ENCODE measurements at regions of chrX and their contacts with region 1.

Region 1: DNA sequence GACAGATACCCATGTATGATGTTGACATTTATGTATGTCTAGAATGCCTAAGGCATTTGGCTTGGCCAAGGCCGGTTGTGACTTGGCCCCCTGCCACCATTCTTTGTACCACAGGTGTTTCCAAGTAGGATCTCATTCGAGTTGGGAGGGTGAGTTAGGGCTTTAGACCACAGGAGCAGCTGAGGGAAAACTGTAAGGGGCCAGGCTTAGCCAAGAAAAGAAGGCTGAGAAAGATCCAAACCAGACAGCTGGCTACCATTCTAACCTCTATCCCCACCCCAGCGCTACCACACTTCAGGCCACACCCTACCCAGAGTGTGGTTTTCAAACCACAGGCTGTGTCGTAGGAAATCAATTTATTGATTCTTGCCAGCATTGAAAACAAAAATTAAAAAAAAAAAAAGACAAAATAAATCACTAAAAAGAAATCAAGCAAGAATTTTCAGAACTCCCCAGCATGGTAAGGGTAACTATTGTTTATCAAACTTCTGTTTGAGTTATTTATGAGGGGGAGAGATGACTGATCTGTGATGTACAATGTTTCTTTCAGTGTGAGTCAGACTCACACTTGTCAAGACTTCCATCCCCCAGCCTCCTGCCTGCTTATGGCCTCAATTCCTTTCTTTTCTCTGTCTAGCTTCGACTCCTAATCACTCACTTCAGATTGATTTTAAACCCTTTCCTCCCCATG is 9.9 kb downstream of the TMSB4X start:
- DNase-seq: peak; percentile 65
- H3K4me3 Mint-ChIP-seq: peak overlapping the region; percentile 50
- H3K27ac Mint-ChIP-seq: peak overlapping the region; percentile 94
- H3K4me1 Mint-ChIP-seq: peaks cover 75% of the 10 kb centered on the region
- H3K27me3 Mint-ChIP-seq: no peaks in the 10 kb centered on the region

Region 2: DNA sequence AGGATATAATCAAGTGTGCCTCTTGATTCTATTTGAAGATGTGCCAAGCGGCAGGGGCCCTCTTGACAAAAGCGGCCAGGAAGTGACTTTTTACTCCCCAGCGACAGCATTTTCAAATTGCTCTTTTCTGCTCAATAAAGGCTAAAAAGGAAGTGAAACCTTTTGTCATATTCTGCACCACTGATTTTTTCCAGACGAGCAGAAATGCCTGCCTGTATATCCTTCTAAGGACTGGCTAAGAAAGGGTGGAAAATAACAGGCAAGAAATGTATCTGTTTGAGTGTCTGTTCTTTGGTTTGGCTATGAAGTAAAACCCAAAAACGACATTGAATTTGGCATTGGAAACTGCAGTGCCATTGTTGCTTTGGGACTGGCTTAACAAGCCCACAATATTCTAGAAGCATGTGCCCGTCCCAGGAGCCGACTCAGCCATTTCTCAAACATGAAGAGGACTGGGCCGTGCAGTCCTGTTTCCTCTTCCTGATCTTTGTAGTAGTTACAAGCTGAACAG is 15.6 kb after region 1 on chrX:
- CTCF ChIA-PET with region 1: interaction called, 6 read pairs
- POLR2A ChIA-PET with region 1: interaction called, 22 read pairs
- intact Hi-C with region 1: loop called (anchors 1 kb)
- DNase-seq: peak; percentile 59
- H3K4me3 Mint-ChIP-seq: peak overlapping the region; percentile 60
- H3K27ac Mint-ChIP-seq: peak overlapping the region; percentile 94
- H3K4me1 Mint-ChIP-seq: peaks cover 70% of the 10 kb centered on the region
- H3K27me3 Mint-ChIP-seq: no peaks in the 10 kb centered on the region

Region 3: DNA sequence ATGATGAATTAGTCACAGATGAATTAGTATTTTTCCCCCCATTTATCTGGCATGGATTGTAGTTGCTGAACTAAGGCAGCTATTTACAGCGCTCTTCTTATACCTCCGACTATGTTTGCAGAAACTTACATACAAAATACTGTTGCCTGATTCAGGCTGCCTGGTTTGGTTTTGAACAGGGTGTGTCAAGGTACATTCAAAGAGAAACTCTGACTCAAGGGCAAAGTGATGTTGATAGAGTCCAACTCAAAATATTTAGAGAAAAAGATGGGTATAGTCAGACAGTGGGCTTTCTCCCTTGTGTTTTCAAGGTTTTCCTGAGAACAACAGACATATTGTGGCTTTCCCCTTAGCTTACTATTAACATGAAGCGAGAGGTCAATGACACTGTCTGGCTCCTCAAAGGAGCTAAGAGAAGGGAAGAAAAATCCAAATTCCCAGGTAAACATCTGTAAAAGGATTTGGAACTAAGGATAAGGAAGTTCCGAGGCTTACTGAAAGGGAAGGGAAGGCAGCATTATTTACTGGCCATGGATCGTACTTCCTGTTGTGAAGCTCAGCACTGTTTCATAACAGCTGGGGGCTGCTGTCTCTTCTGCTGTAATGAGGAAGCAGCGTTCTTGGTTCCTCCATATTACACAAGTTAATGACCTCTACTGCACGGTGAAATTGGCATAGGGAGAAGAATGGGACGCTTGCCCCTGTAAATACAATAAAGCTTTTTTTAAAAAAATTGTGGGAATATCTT is 28.8 kb after region 1 on chrX:
- CTCF ChIA-PET with region 1: no interaction called
- POLR2A ChIA-PET with region 1: interaction called, 4 read pairs
- intact Hi-C with region 1: loop called (anchors 1 kb)
- DNase-seq: peak; percentile 39
- H3K4me3 Mint-ChIP-seq: peak overlapping the region; percentile 62
- H3K27ac Mint-ChIP-seq: peak overlapping the region; percentile 88
- H3K4me1 Mint-ChIP-seq: peaks cover 65% of the 10 kb centered on the region
- H3K27me3 Mint-ChIP-seq: no peaks in the 10 kb centered on the region

Region 4: GRCh38 chrX:13023548-13023947 is 38.8 kb after region 1 on chrX:
- CTCF ChIA-PET with region 1: no interaction called
- POLR2A ChIA-PET with region 1: no interaction called
- intact Hi-C with region 1: no loop called
- DNase-seq: no peak
- H3K4me3 Mint-ChIP-seq: no peak overlapping the region
- H3K27ac Mint-ChIP-seq: peak overlapping the region; percentile 64
- H3K4me1 Mint-ChIP-seq: peaks cover 57% of the 10 kb centered on the region
- H3K27me3 Mint-ChIP-seq: no peaks in the 10 kb centered on the region